ENCODE measurements at regions of chr2 and their contacts with region 1.

Region 1: GRCh38 chr2:109510136-109511028 is 103.4 kb downstream of the SEPTIN10 start:
- DNase-seq: peak; percentile 73 to 92 (median 86)
- ATAC-seq: peak; percentile 60 to 68
- H3K4me3 ChIP-seq: no peak overlapping the region
- H3K27ac ChIP-seq: no peak overlapping the region
- H3K4me1 ChIP-seq: no peaks in the 10 kb centered on the region
- H3K27me3 ChIP-seq: no peaks in the 10 kb centered on the region

Region 2: DNA sequence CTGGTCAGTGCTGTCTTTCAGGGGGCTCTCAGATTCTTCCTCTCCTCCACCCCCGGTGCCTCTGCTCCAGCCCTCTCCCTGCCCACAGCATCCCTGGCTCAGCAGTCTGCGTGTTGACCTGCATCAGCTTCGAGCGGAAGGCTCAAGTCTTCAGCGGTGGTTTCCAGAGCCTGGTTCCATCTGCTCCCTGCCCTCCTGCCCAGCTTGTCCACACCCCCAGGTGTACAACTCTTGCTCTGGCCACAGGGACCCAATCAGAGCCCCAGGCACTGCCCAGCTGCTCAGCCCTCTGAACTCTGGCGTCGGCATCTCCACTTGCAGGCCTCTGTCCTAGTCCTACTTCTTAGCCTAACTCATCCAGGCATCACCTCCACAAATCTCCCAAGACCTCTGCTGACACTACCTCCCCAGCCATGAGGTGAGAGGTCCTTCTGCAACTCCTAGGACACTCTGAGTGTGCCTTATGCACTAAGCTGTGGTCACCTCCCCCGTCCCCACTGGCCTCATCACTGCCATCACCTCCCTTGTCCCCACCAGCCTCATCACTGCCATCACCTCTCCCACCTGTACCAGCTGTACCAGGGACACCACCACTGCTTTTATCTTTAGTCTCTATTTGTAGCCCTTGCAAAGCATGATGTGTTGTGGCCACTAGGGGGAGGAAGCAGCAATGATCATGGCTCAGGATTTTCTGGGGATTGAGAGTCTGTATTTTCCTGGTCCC is 582.3 kb before region 1 on chr2:
- intact Hi-C with region 1: loop called in 1 of 4 experiments (anchors 10 kb)
- DNase-seq: no peak
- ATAC-seq: peak; percentile 34 to 36
- H3K4me3 ChIP-seq: no peak overlapping the region
- H3K27ac ChIP-seq: no peak overlapping the region
- H3K4me1 ChIP-seq: no peaks in the 10 kb centered on the region
- H3K27me3 ChIP-seq: no peaks in the 10 kb centered on the region

Region 3: GRCh38 chr2:109009920-109010610 is 500.3 kb before region 1 on chr2:
- intact Hi-C with region 1: no loop called
- DNase-seq: no peak
- ATAC-seq: no peak
- H3K4me3 ChIP-seq: no peak overlapping the region
- H3K27ac ChIP-seq: no peak overlapping the region
- H3K4me1 ChIP-seq: no peaks in the 10 kb centered on the region
- H3K27me3 ChIP-seq: no peaks in the 10 kb centered on the region

Region 4: GRCh38 chr2:109128048-109128465 is 382.3 kb before region 1 on chr2:
- intact Hi-C with region 1: loop called (anchors 2 to 5 kb)
- DNase-seq: peak; percentile 87 to 94 (median 93)
- ATAC-seq: peak; percentile 89 to 91
- H3K4me3 ChIP-seq: peak overlapping the region; percentile 68
- H3K27ac ChIP-seq: peak overlapping the region; percentile 5
- H3K4me1 ChIP-seq: no peaks in the 10 kb centered on the region
- H3K27me3 ChIP-seq: no peaks in the 10 kb centered on the region

Region 5: GRCh38 chr2:109195193-109196045 is 315.0 kb before region 1 on chr2:
- intact Hi-C with region 1: no loop called
- DNase-seq: peak; percentile 38 to 71 (median 71)
- ATAC-seq: peak; percentile 56 to 66
- H3K4me3 ChIP-seq: no peak overlapping the region
- H3K27ac ChIP-seq: peak overlapping the region; percentile 86
- H3K4me1 ChIP-seq: peaks cover 26% of the 10 kb centered on the region
- H3K27me3 ChIP-seq: no peaks in the 10 kb centered on the region

Region 6: DNA sequence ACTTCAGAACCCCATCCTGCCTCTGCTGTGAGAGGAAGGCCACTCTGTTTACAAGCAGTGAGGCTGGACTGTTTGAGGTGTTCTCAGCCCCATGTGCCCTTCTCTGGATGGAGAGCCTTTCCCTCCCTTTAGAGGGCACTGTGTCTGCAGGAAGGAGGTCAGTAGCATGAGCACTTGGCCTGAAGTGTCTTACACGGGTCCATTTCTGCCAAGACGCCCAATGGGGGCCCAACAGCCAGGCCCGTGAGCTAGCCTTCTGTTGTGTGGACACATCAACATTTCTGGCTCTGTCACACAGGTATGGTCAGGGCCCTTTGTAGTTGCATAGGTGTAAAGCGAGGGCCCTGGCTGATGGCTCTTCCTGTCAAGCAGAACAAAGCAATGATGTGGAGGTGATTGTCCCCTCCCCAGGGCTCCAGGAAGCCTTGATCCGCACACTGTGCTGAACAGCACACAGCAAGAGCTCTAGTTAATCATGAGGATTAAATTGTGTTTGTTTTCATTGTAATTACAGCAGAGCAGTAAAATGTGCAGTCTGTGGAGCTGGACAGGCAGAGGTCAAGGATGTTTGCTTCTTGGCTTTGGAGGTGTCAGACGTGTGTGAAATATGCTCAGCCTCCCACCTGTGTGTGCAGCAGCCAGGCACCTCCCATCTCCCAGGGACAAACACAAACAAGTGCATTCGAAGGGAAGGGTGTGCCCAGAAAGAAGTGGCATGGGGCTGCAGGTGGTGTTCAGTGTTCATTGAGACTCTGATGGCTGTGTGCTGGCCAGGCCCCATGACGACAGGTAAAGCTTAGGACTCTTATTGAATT is 249.3 kb before region 1 on chr2:
- intact Hi-C with region 1: loop called in 1 of 4 experiments (anchors 10 kb)
- DNase-seq: no peak
- ATAC-seq: no peak
- H3K4me3 ChIP-seq: no peak overlapping the region
- H3K27ac ChIP-seq: no peak overlapping the region
- H3K4me1 ChIP-seq: peaks cover 27% of the 10 kb centered on the region
- H3K27me3 ChIP-seq: no peaks in the 10 kb centered on the region

Region 7: GRCh38 chr2:109419960-109420370 is 90.4 kb before region 1 on chr2:
- intact Hi-C with region 1: loop called in 1 of 4 experiments (anchors 10 kb)
- DNase-seq: peak in 1 of 3 donors; percentile 11
- ATAC-seq: no peak
- H3K4me3 ChIP-seq: no peak overlapping the region
- H3K27ac ChIP-seq: no peak overlapping the region
- H3K4me1 ChIP-seq: no peaks in the 10 kb centered on the region
- H3K27me3 ChIP-seq: no peaks in the 10 kb centered on the region